HEK293 (cell line): ENCODE measurements at regions of chr10 and their contacts with region 1.

Region 1: GRCh38 chr10:103888113-103888841 is 29.7 kb downstream of the STN1 start:
- H3K4me3 ChIP-seq: no peak overlapping the region
- H3K27ac ChIP-seq: no peak overlapping the region
- H3K4me1 ChIP-seq: no peaks in the 10 kb centered on the region
- CTCF ChIP-seq: peak; percentile 64; the same call in 1 of the 2 replicates

Region 2: GRCh38 chr10:103554488-103555324 is 333.6 kb before region 1 on chr10:
- CTCF ChIA-PET with region 1: no interaction called
- POLR2A ChIA-PET with region 1: no interaction called
- H3K4me3 ChIP-seq: peak overlapping the region; percentile 36
- H3K27ac ChIP-seq: no peak overlapping the region
- H3K4me1 ChIP-seq: peaks cover 3% of the 10 kb centered on the region; the same call in 1 of the 2 replicates
- CTCF ChIP-seq: no peak

Region 3: DNA sequence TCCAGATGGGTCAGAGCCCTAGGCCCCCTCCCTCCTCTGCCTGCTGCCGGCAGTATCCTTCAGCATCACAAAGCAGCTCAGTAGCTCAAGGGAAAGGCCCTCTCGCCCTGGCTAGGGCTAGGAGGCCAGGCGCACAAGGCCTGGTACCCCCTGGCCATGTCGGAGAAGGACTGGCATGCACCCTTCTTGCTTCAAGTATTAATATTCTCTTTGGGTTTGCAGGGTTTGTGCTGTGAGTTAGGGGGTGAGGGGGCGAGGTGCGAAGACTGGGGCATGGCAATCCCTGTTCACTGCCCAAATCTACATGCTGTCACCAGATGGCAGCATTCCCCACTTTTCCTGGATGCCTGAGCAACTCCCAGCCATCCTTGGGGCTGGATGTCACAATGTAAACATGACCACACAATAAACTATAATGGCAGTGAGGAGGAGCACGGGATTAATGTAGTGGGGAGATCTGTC is 289.6 kb before region 1 on chr10:
- CTCF ChIA-PET with region 1: interaction called, 13 read pairs
- POLR2A ChIA-PET with region 1: no interaction called
- H3K4me3 ChIP-seq: no peak overlapping the region
- H3K27ac ChIP-seq: no peak overlapping the region
- H3K4me1 ChIP-seq: no peaks in the 10 kb centered on the region
- CTCF ChIP-seq: peak; percentile 90

Region 4: GRCh38 chr10:103720328-103720963 is 167.8 kb before region 1 on chr10:
- CTCF ChIA-PET with region 1: interaction called, 151 read pairs
- POLR2A ChIA-PET with region 1: no interaction called
- H3K4me3 ChIP-seq: no peak overlapping the region
- H3K27ac ChIP-seq: no peak overlapping the region
- H3K4me1 ChIP-seq: peaks cover 3% of the 10 kb centered on the region; the same call in 1 of the 2 replicates
- CTCF ChIP-seq: no peak

Region 5: GRCh38 chr10:103845972-103846371 is 42.3 kb before region 1 on chr10:
- CTCF ChIA-PET with region 1: no interaction called
- POLR2A ChIA-PET with region 1: no interaction called
- H3K4me3 ChIP-seq: no peak overlapping the region
- H3K27ac ChIP-seq: no peak overlapping the region
- H3K4me1 ChIP-seq: no peaks in the 10 kb centered on the region
- CTCF ChIP-seq: no peak

Region 6: GRCh38 chr10:103901299-103901698 is 13.0 kb after region 1 on chr10:
- CTCF ChIA-PET with region 1: interaction called, 12 read pairs
- POLR2A ChIA-PET with region 1: no interaction called
- H3K4me3 ChIP-seq: no peak overlapping the region
- H3K27ac ChIP-seq: no peak overlapping the region
- H3K4me1 ChIP-seq: peaks cover 3% of the 10 kb centered on the region; the same call in 1 of the 2 replicates
- CTCF ChIP-seq: no peak

Region 7: DNA sequence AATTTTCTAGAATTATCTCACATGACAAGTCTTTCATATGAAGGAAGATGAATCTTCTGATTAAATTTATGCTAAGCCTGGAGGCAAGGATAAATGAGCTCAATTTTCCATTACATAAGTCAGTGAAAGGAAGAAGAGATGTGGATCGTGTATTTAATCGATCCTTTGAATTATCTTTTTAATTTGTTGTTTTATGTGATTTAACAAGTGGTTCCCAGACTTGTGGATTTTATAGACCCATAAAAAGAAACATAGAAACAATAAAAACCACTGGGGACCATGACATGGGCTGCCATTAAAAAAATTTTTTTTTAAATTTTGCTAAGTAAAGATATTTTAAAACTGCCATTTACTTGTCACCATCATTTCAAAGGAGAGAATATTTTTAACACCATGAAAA is 123.6 kb after region 1 on chr10:
- CTCF ChIA-PET with region 1: interaction called, 10 read pairs
- POLR2A ChIA-PET with region 1: no interaction called
- H3K4me3 ChIP-seq: no peak overlapping the region
- H3K27ac ChIP-seq: no peak overlapping the region
- H3K4me1 ChIP-seq: no peaks in the 10 kb centered on the region
- CTCF ChIP-seq: no peak

Region 8: GRCh38 chr10:104209575-104210198 is 321.4 kb after region 1 on chr10:
- CTCF ChIA-PET with region 1: interaction called, 10 read pairs
- POLR2A ChIA-PET with region 1: no interaction called
- H3K4me3 ChIP-seq: no peak overlapping the region
- H3K27ac ChIP-seq: no peak overlapping the region
- H3K4me1 ChIP-seq: no peaks in the 10 kb centered on the region
- CTCF ChIP-seq: no peak